ENCODE measurements at regions of chr12 and their contacts with region 1.

Region 1: DNA sequence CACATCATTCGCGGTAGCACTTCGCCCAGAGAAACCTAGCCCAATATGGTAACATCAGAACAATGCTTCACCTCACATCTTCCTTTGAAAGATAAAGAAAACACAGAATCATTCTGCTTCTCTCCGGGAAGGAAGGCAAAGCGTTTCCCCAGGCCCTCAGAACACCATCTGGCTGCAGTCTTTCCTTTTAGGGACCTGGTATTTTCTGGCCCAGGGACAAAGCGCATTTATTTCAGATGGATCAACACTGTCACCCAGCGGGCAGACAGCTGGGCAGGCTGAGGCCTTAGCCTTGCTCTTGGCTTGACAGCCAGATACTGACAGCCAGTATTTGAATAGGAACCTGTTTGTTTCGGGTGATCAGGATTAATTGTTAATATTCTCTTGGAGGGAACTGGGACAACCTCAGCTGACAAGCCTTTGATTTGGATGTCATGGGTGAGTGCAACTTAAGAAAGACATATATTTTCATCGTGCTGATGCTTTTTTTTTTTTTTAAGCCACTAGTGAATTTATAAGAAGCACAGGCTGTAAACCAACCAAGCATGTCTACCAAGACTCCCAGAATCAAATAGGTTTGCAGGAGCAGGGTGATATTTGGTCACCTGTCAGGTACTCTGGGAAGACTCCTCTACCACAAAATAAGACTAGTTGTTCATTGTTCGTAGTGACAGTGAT is 118.9 kb downstream of the VEZT start:
- DNase-seq: peak; percentile 46
- H3K4me3 ChIP-seq: no peak overlapping the region; the same call in 1 of the 2 replicates
- CTCF ChIP-seq: peak; percentile 94

Region 2: GRCh38 chr12:94545935-94546771 is 790.4 kb before region 1 on chr12:
- CTCF ChIA-PET with region 1: interaction called, 28 read pairs
- POLR2A ChIA-PET with region 1: no interaction called
- DNase-seq: no peak
- H3K4me3 ChIP-seq: no peak overlapping the region
- CTCF ChIP-seq: peak; percentile 58

Region 3: GRCh38 chr12:95072900-95073697 is 263.4 kb before region 1 on chr12 and contains the start of gene NR2C1:
- CTCF ChIA-PET with region 1: interaction called, 18 read pairs
- POLR2A ChIA-PET with region 1: no interaction called
- DNase-seq: peak; percentile 47
- H3K4me3 ChIP-seq: peak within 1 kb of the TSS; percentile 86
- CTCF ChIP-seq: no peak

Region 4: DNA sequence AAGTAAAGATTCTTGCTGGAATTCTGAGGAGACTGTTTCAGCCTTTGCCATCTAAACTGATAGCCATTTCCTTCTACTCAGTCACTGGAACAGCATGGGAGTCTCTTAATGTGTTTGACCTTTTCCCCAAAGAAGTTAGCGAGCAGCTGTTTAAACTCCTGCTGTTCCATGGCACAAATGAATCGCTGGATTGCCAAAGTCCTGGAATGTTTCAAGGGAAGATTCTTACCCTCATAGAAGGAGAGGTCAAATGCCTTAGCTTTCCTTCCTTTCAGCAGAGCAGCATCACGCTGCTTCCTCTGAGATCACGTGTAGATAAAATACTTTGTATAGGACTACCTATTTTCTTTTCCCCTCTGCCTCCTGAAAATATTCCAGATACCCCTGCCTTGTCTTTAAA is 252.6 kb before region 1 on chr12:
- CTCF ChIA-PET with region 1: interaction called, 13 read pairs
- POLR2A ChIA-PET with region 1: no interaction called
- DNase-seq: peak; percentile 38
- H3K4me3 ChIP-seq: no peak overlapping the region
- CTCF ChIP-seq: no peak

Region 5: DNA sequence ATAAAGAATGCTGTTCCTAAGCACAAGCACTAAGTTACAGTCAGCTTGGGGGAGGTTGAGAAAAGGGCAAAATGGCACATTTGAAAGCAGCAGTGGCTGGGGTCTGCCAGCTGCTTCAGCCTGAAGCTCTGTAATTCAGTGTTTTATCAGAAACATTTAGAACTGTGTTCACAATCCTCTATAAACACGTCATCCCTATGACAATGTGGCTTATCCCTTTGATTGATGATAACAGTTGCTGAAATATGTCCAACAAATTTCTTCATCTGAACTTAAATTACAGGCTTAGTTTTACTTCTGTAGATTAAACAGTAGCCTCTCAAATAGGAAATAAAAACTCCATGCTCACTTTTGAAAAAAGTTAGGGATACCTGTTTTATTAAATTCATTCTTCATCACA is 10.1 kb before region 1 on chr12:
- CTCF ChIA-PET with region 1: interaction called, 13 read pairs
- POLR2A ChIA-PET with region 1: no interaction called
- DNase-seq: no peak
- H3K4me3 ChIP-seq: no peak overlapping the region
- CTCF ChIP-seq: no peak

Region 6: DNA sequence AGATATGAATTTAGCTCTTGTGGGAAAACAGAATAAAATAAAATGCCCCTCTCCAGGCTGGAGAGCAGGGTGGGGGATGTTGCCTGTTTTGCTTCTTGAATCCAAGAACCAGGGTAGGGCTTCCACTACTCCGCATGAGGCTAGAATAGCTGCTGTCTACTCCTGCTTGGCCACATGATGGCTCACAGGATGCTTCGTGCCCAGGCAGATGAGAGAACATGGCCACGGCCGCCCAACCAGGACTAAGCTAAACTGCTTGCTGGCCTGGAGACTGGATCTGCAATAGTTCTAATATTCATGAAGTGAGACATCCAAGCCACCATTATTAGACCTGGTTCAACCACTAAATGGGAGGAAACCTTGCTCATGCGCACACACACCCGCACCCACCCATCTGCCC is 15.2 kb after region 1 on chr12:
- CTCF ChIA-PET with region 1: interaction called, 15 read pairs
- POLR2A ChIA-PET with region 1: no interaction called
- DNase-seq: no peak
- H3K4me3 ChIP-seq: no peak overlapping the region
- CTCF ChIP-seq: no peak

Region 7: DNA sequence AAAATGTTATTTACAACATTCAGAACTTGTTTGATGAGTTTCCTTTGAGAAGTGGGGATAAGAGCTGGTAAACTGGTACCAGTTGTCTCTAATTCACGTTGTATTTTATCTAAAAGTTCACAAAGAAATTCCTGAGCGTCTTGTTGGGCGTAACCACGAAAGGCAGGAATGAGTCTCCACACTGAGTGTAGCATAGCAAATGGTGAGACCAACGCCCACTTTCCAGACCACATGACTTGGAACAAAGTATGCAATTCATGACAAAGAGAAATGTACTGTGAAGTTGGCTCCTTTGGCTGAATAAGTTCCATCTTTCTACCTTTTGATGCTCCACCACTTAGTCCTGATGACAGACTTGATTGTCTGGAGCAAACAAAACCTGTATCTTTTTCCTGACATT is 196.3 kb after region 1 on chr12:
- CTCF ChIA-PET with region 1: interaction called, 24 read pairs
- POLR2A ChIA-PET with region 1: no interaction called
- DNase-seq: no peak
- H3K4me3 ChIP-seq: no peak overlapping the region
- CTCF ChIP-seq: no peak